ENCODE measurements at regions of chr2 and their contacts with region 1.

Region 1: GRCh38 chr2:215717501-215718381 is 281.9 kb upstream of the FN1 start:
- DNase-seq: no peak
- H3K4me3 ChIP-seq: no peak overlapping the region
- H3K27ac ChIP-seq: peak overlapping the region; percentile 17 to 85 (median 62)
- H3K4me1 ChIP-seq: peaks cover 0 to 52% (median 38%) of the 10 kb centered on the region in 4 donors
- H3K27me3 ChIP-seq: no peaks in the 10 kb centered on the region
- CTCF ChIP-seq: no peak
- EP300 ChIP-seq: no peak
- POLR2A ChIP-seq: no peak

Region 2: DNA sequence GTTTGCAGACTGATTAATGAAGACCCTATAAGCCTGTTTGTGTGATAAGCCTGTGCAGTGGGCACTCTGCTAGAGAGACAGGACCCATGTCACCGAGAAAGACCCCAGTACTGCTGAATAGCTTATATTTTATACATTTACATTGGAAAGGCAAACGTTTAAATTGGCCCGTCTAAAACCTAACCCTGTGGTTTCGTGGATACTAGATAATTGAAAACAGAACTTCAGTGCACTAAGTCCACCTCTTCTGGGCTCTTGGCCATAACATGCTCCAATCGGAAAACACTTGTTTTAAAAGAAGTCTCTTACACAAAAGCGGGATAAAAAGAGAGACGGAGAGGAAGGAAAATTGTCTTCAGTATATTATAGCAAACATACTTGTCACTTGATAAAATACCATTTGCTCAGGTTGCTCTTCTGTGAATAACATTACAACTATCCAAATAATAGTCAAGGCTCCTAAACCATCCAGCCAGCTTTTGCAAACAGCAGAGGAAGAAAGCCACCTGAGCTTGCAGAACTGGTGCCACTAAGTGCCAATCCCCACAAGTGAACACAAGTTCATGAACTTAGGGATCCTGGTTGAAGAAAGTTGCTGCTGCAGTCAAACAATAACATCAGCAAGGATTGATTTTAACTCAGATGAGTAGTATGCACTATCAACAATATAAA is 63.5 kb before region 1 on chr2:
- intact Hi-C with region 1: no loop called
- DNase-seq: no peak
- H3K4me3 ChIP-seq: no peak overlapping the region
- H3K27ac ChIP-seq: peak overlapping the region; percentile 62 to 80 (median 72)
- H3K4me1 ChIP-seq: peaks cover 0 to 57% (median 36%) of the 10 kb centered on the region in 4 donors
- H3K27me3 ChIP-seq: no peaks in the 10 kb centered on the region
- CTCF ChIP-seq: no peak
- EP300 ChIP-seq: no peak
- POLR2A ChIP-seq: no peak

Region 3: DNA sequence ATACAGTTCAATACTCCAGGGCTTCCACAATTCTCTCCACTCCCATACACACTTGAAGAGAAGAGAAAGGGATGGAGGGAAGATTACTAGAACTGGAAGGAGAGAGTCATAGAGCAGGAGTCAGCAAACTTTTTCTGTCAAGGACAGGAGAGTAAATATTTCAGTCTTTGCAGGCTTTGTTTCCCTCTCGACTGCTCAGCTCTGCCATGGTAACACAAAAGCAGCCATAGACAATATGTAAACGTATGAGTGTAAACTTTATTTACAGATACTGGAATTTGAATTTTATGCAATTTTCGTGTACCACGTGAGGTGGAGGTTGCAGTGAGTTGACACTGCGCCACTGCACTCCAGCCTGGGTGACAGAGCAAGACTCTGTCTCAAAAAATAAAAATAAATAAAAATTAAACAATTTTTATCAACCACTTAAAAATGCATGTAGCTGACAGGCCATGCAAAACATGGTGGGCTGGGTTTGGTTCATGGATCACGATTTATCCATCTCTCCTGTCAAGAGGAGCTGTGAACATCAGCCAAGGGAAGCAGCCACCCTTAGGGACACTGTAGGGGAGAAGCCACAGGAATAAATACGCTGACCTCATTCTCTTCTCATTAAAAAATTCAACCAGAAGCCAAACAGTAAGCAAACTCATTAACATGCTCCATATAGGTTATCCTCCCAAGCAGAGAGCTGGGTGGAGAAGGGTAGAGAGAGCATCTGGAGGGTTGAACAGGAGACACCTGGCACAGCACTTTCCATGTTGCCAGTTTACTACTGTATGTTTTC is 15.4 kb before region 1 on chr2:
- intact Hi-C with region 1: loop called (anchors 2 kb)
- DNase-seq: no peak
- H3K4me3 ChIP-seq: no peak overlapping the region
- H3K27ac ChIP-seq: peak overlapping the region; percentile 68 to 82 (median 73)
- H3K4me1 ChIP-seq: peaks cover 0 to 50% (median 39%) of the 10 kb centered on the region in 4 donors
- H3K27me3 ChIP-seq: no peaks in the 10 kb centered on the region
- CTCF ChIP-seq: no peak
- EP300 ChIP-seq: no peak
- POLR2A ChIP-seq: no peak

Region 4: GRCh38 chr2:215736653-215737290 is 19.0 kb after region 1 on chr2:
- intact Hi-C with region 1: no loop called
- DNase-seq: no peak
- H3K4me3 ChIP-seq: no peak overlapping the region
- H3K27ac ChIP-seq: no peak overlapping the region
- H3K4me1 ChIP-seq: no peaks in the 10 kb centered on the region
- H3K27me3 ChIP-seq: no peaks in the 10 kb centered on the region
- CTCF ChIP-seq: no peak
- EP300 ChIP-seq: no peak
- POLR2A ChIP-seq: no peak